Activated T-helper 2 cell treated with anti-CD3 and anti-CD28 coated beads, Interferon-gamma antibody, Interleukin-2, Interleukin-4, amounts not matched to agents 10 μg/mL and 5 μg/mL and 100 μg/mL, durations not matched to agents 14 hours and 24 hours and 36 hours (primary cell): ENCODE measurements at regions of chr13 and their contacts with region 1.

Region 1: DNA sequence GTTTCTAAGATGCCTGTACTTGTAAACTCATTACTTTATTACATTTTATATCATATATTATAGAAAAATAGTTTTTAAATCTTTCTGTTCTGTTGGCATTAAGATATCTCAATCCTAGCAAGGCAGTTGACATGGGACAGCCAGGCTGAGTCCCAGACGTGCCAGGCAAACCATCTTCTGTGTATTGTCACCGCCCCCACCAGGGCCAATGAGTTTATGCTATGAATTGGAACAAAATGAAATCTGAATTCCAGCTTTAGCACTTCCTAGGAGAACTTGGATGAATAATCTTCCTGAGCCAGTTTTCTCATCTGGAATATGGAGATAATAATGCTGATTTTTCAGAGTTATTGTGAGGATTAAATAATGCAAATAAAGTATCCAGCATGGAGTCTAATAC is 79.9 kb upstream of the GSX1 start:
- DNase-seq: no peak
- H3K4me3 Mint-ChIP-seq: no peak overlapping the region
- H3K27ac Mint-ChIP-seq: no peak overlapping the region
- H3K4me1 Mint-ChIP-seq: no peaks in the 10 kb centered on the region
- H3K27me3 Mint-ChIP-seq: peaks cover 27% of the 10 kb centered on the region

Region 2: GRCh38 chr13:27533155-27533643 is 179.2 kb before region 1 on chr13:
- intact Hi-C with region 1: loop called (anchors 10 kb)
- DNase-seq: peak; percentile 14
- H3K4me3 Mint-ChIP-seq: no peak overlapping the region
- H3K27ac Mint-ChIP-seq: no peak overlapping the region
- H3K4me1 Mint-ChIP-seq: no peaks in the 10 kb centered on the region
- H3K27me3 Mint-ChIP-seq: peaks cover 12% of the 10 kb centered on the region